ENCODE measurements at regions of chr12 and their contacts with region 1.

Region 1: DNA sequence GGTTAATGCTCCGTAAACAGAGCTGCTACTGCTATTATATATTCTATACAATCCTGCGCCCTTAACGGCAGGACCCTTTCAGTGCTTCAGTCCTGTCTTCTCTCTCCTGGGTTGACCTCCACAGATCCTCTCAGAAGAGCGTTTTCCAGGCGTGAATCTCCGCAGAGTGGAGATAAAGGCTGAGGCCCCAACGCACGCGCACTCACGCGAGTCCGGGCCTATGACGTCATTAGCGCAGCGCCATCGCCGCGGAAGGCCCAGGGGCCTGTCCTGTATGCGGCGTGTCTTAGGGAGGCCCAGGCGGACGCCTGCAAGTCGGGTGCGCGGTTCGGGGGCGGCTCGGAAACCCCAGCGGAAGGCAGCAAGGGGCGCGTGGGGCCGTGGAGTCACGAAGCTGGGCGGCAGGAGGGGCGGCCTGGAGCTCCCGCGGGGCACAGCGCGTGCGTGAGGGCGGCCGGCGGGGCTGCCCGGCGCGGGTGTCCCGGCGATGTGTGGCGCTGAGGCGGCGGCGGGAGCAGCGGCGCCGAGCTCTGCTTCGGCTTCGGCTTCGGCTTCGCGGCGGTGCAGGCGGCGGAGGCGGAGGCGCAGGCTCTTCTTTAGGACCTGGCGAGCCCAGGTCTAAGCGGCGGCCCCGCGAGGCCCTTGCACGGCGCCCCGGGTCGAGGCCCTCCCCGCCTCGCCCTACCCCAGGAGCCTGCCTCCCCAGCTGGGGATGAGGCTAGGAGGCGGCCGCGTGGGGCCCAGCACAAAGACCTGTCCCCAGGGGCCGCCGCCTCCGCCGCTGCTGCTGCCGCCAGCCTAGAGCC is at the start of gene MAPKAPK5:
- DNase-seq: peak; percentile 96
- H3K4me3 Mint-ChIP-seq: peak within 1 kb of the TSS; percentile 92
- H3K27ac Mint-ChIP-seq: peak within 1 kb of the TSS; percentile 98
- H3K4me1 Mint-ChIP-seq: peaks cover 25% of the 10 kb centered on the region
- H3K27me3 Mint-ChIP-seq: no peaks in the 10 kb centered on the region
- CTCF ChIP-seq: no peak
- total RNA-seq, gene MAPKAPK5: 84.2 and 84.8 TPM in 2 replicates

Region 2: DNA sequence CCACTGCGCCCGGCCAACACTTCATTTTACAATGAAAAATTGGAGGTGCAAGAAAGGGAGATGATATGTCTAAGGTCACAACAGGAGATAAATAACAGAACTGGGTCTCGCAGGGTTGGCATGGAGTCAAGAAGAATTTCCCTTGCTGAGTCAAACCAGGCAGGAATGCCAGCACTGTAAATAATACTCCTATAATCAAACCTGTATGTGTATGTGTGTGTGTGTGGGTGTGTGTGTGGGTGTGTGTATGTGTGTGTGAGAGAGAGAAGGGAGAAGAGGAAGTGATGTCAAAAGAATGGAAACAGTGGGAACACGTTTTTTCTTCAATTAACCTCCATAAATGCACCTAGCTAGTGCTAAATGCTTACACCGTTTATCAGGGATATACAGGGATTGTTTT is 100.6 kb after region 1 on chr12:
- CTCF ChIA-PET with region 1: interaction called, 10 read pairs
- intact Hi-C with region 1: no loop called
- DNase-seq: peak; percentile 60
- H3K4me3 Mint-ChIP-seq: no peak overlapping the region
- H3K27ac Mint-ChIP-seq: peak overlapping the region; percentile 25
- H3K4me1 Mint-ChIP-seq: peaks cover 9% of the 10 kb centered on the region
- H3K27me3 Mint-ChIP-seq: no peaks in the 10 kb centered on the region
- CTCF ChIP-seq: no peak

Region 3: DNA sequence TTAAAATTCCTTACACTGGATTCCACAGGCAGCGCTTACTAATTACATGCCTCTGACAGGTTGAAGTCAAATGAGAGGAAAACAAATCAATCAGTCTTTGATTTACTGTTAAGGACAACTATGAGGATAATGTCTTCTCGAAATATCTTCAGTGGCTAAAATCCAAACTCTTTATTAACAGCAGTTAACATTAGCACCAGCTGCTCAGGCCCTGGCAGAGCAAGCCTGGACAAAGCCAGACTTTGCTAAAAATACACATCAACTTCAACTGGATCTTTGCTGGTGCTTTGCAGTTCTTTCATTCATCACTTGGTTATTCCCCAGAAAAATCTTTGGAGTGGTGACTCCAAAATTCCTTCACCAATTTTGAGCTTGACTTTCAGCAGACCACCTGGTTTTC is 441.6 kb after region 1 on chr12:
- CTCF ChIA-PET with region 1: no interaction called
- intact Hi-C with region 1: no loop called
- DNase-seq: no peak
- H3K4me3 Mint-ChIP-seq: no peak overlapping the region
- H3K27ac Mint-ChIP-seq: no peak overlapping the region
- H3K4me1 Mint-ChIP-seq: no peaks in the 10 kb centered on the region
- H3K27me3 Mint-ChIP-seq: no peaks in the 10 kb centered on the region
- CTCF ChIP-seq: no peak

Measured in Calu3 (cell line).